ENCODE measurements at regions of chr1 and their contacts with region 1.

Region 1: DNA sequence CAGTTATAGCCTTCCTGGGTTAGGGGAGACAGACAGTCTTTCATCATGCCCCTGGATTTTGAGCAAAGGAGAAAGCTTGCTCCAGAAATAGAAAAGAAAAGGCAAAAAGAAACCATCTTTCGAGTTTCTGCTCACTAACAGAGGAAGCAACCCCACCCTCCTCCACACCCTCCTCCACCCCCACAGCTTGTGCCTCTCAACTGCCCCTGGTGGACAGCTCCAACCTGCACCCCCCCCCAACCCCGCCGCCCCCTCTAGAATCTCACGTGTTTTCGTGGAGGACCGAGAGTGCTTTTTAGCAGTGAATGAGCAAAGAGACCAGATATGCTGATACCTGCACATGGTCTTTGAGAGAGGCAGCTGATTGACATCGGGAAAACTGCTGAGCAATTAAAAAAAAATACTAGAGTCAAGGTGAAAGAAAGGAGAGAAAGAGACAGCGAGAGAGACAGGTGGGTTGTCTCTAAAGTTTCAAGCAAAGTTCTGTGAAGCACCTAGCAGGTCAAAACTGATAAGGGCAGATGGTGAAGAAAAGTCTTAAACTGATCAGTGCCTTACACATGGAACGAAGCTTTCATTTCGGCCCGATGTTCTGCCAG is 358.3 kb downstream of the KIF26B start:
- DNase-seq: no peak
- ATAC-seq: no peak

Region 2: DNA sequence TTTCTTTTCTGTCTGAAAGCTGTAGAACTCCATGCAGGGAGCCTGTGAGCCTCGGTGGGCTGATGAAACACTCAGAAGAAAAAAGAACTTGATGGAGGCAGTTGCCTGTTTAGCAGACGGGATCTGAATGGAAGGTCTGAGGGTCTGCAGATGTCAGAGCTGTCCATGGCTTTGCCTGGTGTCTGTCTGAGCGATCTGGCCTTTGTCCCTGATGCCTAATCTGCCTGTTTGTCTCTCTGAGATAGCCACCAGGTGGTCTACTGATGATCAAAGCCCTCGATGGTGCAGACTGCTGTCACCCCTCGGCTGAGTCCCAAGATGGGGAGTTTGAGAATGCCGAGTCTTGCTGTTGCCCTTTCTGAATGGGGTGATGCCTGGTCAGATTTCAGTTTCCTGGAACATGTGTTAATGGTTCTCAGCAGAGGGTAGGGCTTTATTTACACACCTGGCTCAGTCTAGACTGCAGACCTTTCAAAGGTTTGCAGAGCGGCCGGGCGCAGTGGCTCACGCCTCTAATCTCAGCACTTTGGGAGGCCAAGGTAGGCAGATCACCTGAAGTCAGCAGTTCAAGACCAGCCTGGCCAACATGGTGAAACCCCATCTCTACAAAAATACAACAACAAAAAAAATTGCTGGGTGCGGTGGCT is 267.9 kb before region 1 on chr1:
- intact Hi-C with region 1: loop called (anchors 10 kb)
- DNase-seq: no peak
- ATAC-seq: no peak

Measured in sciatic nerve (tissue), 2 donors.